A673 (cell line): ENCODE measurements at regions of chr17 and their contacts with region 1.

Region 1: GRCh38 chr17:30093463-30094147 is 23.0 kb upstream of the NSRP1 start:
- DNase-seq: peak; percentile 87
- H3K4me3 ChIP-seq: no peak overlapping the region
- H3K27ac ChIP-seq: peak overlapping the region; percentile 89
- H3K4me1 ChIP-seq: peaks cover 58% of the 10 kb centered on the region
- H3K27me3 ChIP-seq: no peaks in the 10 kb centered on the region
- CTCF ChIP-seq: peak; percentile 85

Region 2: DNA sequence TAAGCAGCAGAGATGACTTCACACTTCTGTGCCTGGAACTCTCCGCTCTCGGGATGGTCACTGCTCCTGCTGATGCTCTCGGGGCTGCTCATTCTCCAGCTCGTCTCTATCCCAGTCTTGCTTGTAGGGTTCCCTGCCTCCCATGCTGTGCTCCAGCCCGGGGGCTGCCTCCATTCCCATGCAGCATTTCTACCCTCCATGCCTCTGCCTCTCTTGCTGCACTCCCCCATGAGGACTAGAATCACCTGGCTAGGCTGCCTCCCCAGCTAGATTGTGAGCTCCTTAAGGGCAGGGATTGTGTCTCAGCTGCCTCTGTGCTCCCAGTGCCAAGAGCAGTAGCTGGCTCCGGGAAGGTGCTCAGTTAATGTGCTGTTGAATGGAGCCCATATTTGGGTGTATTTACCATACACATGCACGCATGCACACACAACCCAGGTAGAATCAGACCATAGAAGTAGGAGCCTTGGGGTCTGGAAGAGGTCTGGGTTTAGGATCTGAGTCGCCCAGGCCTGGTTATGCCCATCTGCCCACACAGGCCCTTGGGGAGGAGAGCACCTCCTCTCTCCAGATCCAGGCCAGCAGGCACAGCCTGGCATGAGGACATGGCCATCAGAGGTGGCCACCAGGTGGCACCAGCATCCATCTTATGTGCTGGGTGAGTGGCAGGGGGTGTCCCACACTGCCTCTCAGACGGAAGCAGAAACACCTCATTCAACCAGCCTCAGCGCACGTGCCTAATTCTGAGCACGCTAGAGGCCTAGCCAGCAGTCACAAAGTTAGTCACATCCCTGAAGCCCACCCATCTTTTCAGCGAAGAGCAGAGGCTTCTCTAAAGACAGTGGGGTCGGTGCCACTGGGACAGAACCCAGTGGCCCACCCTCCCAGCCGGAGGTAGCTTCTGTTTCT is 513.5 kb before region 1 on chr17:
- CTCF ChIA-PET with region 1: interaction called, 5 read pairs
- POLR2A ChIA-PET with region 1: no interaction called
- intact Hi-C with region 1: loop called (anchors 2 kb)
- DNase-seq: peak; percentile 91
- H3K4me3 ChIP-seq: no peak overlapping the region
- H3K27ac ChIP-seq: no peak overlapping the region
- H3K4me1 ChIP-seq: peaks cover 12% of the 10 kb centered on the region
- H3K27me3 ChIP-seq: no peaks in the 10 kb centered on the region
- CTCF ChIP-seq: peak; percentile 93

Region 3: DNA sequence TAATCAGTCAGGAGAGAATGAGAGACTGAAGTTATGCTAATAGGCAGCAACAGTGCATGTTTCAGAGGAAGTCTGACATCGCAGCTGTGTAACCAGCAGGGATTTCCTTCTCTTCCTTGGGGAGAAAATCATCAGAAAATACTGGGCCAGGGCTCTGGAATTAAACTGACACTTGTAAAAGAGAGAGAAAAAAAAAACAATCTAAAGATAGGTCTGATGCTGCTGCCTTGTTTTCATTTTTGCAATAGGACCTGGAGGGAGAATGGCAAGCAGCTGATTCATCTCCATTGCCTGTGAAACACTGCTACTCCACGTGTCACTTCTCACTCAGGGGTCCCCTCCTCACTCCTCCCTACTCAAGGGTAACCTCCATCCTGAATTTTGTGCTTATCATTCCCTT is 453.2 kb before region 1 on chr17:
- CTCF ChIA-PET with region 1: interaction called, 17 read pairs
- POLR2A ChIA-PET with region 1: no interaction called
- intact Hi-C with region 1: loop called (anchors 1 kb)
- DNase-seq: peak; percentile 82
- H3K4me3 ChIP-seq: no peak overlapping the region
- H3K27ac ChIP-seq: peak overlapping the region; percentile 67
- H3K4me1 ChIP-seq: peaks cover 62% of the 10 kb centered on the region
- H3K27me3 ChIP-seq: no peaks in the 10 kb centered on the region
- CTCF ChIP-seq: no peak

Region 4: DNA sequence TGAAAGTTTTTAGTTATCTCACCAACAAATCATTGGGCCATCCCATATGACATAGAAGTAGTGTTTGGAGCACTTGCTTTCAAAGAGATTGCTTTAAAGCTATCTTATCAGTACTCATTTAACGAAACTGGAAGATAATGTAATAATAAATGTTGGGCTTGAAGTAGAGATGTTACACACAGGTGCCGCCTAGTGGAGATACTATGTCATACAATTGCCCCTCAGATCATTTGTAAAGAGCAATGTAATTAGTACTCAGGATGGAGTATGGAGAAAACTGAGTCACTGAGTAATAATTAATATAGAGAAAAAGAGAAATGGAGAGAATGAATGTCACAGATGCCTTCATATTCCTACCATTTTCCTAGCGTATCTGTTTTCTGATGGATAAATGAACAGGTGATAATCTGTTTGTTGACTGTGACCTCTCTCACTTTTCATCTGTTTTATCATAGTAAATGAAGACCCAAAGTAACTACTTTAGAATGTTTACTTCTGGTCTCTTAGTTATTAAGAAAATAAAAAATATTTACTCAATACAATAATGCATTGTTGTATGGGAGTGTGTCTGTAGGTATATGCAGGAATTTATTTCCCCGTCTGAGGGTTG is 71.8 kb before region 1 on chr17:
- CTCF ChIA-PET with region 1: interaction called, 3 read pairs
- POLR2A ChIA-PET with region 1: no interaction called
- intact Hi-C with region 1: loop called (anchors 1 kb)
- DNase-seq: peak; percentile 66
- H3K4me3 ChIP-seq: no peak overlapping the region
- H3K27ac ChIP-seq: no peak overlapping the region
- H3K4me1 ChIP-seq: no peaks in the 10 kb centered on the region
- H3K27me3 ChIP-seq: no peaks in the 10 kb centered on the region
- CTCF ChIP-seq: peak; percentile 90

Region 5: GRCh38 chr17:30041551-30041950 is 52.1 kb before region 1 on chr17:
- CTCF ChIA-PET with region 1: interaction called, 10 read pairs
- POLR2A ChIA-PET with region 1: interaction called, 4 read pairs
- intact Hi-C with region 1: loop called (anchors 2 kb)
- DNase-seq: no peak
- H3K4me3 ChIP-seq: no peak overlapping the region
- H3K27ac ChIP-seq: peak overlapping the region; percentile 89
- H3K4me1 ChIP-seq: peaks cover 21% of the 10 kb centered on the region
- H3K27me3 ChIP-seq: no peaks in the 10 kb centered on the region
- CTCF ChIP-seq: no peak

Region 6: GRCh38 chr17:30134551-30134950 is 40.9 kb after region 1 on chr17:
- CTCF ChIA-PET with region 1: interaction called, 12 read pairs
- POLR2A ChIA-PET with region 1: no interaction called
- intact Hi-C with region 1: no loop called
- DNase-seq: no peak
- H3K4me3 ChIP-seq: no peak overlapping the region
- H3K27ac ChIP-seq: no peak overlapping the region
- H3K4me1 ChIP-seq: no peaks in the 10 kb centered on the region
- H3K27me3 ChIP-seq: no peaks in the 10 kb centered on the region
- CTCF ChIP-seq: no peak